ENCODE measurements at regions of chr3 and their contacts with region 1.

Region 1: DNA sequence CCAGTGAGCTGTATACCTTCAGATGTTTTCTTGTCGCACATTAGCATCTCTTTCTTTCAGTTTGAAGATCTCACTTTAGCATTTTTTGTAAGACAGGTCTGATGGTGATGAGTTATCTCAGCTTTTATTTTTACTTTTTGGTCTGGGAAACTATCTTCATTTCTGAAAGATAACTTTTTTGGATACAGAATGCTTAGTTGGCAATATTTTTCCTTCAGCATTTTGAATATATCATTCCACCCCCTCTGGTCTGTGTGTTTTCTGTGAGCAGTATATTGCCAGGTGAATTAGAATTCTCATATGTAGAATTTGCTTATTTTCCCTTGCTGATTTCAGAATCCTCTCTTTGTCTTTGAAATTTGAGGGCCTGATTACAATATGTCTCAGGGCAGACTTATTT is 743.3 kb downstream of the PLOD2 start:
- DNase-seq: no peak
- ATAC-seq: no peak

Region 2: GRCh38 chr3:145471976-145472375 is 54.3 kb after region 1 on chr3:
- intact Hi-C with region 1: no loop called
- DNase-seq: no peak
- ATAC-seq: no peak

Region 3: DNA sequence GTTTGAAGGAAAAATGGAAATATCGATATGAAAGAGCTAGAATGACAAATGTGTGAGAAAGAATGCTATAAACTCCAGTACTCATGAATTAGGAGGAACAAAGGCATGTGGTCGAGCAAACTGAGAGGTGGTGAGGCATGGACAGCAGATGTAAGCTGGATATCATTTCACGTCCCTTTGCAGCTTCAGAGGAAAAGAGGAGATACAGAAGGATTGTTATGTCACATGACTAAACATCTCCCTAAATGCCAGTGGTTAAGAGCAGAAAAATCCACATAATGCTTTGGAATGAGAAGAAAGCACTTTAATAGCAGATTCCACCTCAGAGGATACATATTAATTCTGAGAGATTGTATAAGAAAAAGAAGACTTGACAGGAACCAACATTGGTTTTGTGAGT is 1740.0 kb after region 1 on chr3:
- intact Hi-C with region 1: loop called (anchors 5 kb)
- DNase-seq: no peak
- ATAC-seq: no peak